Adrenal gland (tissue), 19 donors: ENCODE measurements at regions of chr3 and their contacts with region 1.

Region 1: DNA sequence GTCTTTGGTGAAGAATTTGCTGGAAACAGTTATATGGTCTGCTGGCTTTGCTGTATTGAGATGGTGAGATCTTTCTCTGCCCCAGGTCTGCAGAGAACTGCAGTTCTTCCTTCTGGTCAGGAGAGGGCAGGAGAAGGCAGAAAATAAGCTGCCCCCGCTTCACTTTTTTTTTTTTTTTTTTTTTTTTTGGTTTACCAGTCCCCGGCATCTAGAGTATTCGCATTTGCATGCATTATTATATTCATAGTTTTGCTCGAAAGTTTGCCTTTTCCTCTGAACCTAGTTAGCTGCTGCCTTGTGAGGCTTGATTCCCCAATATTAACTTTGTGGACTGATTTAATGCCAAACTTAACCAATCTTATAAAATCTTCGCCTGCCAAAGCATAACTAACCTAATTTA is 10.6 kb upstream of the PARL start:
- DNase-seq: peak in 5 of 7 donors; percentile 30 to 65 (median 43)
- H3K4me3 ChIP-seq: no peak overlapping the region
- H3K27ac ChIP-seq: no peak overlapping the region
- H3K4me1 ChIP-seq: no peaks in the 10 kb centered on the region
- H3K27me3 ChIP-seq: peaks cover 4% of the 10 kb centered on the region
- CTCF ChIP-seq: peak; percentile 66 to 91 (median 80)
- POLR2A ChIP-seq: no peak

Region 2: GRCh38 chr3:183966251-183966801 is 71.0 kb after region 1 on chr3:
- intact Hi-C with region 1: no loop called
- DNase-seq: no peak
- H3K4me3 ChIP-seq: no peak overlapping the region
- H3K27ac ChIP-seq: no peak overlapping the region
- H3K4me1 ChIP-seq: no peaks in the 10 kb centered on the region
- H3K27me3 ChIP-seq: no peaks in the 10 kb centered on the region
- CTCF ChIP-seq: no peak
- POLR2A ChIP-seq: no peak

Region 3: DNA sequence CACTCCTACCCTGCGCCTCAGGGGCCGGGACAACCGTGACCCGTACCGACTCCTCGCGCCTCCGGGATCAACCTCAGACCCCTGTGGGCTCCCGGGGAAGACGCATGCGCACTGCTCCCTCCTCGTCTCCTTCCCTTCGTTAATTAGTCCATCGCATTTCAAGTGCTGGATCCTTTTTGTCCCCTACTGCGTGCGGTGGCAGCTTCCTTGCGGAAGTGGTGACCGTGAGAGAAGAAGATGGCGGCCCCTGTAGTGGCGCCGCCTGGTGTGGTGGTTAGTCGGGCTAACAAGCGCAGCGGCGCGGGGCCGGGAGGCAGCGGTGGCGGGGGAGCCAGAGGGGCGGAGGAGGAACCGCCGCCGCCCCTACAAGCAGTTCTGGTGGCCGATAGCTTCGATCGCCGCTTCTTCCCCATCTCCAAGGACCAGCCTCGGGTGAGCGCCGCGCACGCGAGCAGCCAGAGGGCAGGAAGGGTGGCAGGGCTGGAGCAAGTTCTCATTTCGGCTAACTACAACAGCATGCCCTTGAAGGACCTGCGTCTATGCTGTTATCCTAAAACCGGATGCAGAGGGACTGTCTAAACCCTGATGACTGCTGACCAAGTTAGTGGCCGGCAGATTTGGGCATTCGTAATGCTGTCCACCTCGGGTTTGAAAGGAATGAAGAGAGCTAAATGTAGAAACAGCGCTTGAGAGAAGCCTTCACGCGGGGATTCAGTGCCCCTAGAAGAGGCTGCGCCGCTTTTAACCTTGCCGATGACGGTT is 240.0 kb after region 1 on chr3 and contains the start of gene EIF2B5:
- intact Hi-C with region 1: loop called in 1 of 2 experiments (anchors 10 kb)
- DNase-seq: peak; percentile 89 to 95 (median 91)
- H3K4me3 ChIP-seq: peak within 1 kb of the TSS; percentile 74 to 96 (median 84)
- H3K27ac ChIP-seq: peak within 1 kb of the TSS; percentile 48 to 91 (median 73)
- H3K4me1 ChIP-seq: peaks cover 7 to 16% of the 10 kb centered on the region in 2 donors
- H3K27me3 ChIP-seq: no peaks in the 10 kb centered on the region
- CTCF ChIP-seq: peak in 2 of 6 experiments; percentile 6 to 38
- POLR2A ChIP-seq: peak; percentile 33 to 74
- total RNA-seq, gene EIF2B5: 19.1 to 50.8 (median 40.2) TPM

Region 4: DNA sequence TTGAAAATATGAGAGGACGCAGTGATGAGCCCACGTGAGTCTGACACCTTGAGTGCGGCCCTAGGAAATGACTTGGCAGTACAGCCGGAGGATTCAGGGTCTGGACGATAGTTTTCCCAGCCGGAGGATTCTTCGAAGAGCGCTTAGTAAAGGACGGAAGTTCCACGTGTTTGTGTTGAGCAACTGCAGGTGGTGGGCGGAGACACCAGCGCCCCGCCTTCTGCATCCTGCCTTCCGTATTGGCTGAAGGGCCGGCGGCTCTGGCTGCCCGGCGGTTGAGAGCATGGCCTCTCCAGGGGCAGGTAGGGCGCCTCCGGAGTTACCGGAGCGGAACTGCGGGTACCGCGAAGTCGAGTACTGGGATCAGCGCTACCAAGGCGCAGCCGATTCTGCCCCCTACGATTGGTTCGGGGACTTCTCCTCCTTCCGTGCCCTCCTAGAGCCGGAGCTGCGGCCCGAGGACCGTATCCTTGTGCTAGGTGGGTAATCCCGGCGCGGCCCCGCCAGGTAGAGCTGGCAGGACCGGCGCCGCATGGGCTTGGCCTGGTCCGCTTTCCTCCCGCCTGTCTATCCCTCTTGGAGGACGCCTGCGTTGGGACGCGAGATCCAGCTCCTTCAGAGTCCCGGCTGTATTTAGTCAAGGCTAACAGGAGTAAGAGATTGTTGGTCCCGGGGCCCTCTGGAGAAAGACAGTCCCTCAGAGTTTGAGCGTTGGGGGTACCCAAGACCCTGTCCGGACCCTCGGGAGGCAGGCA is 354.3 kb after region 1 on chr3 and contains the start of gene EEF1AKMT4:
- intact Hi-C with region 1: loop called (anchors 10 kb)
- DNase-seq: peak; percentile 95 to 99 (median 98)
- H3K4me3 ChIP-seq: peak within 1 kb of the TSS; percentile 55 to 84 (median 79)
- H3K27ac ChIP-seq: peak within 1 kb of the TSS; percentile 61 to 86 (median 72)
- H3K4me1 ChIP-seq: peaks cover 4 to 15% of the 10 kb centered on the region in 2 donors
- H3K27me3 ChIP-seq: no peaks in the 10 kb centered on the region
- CTCF ChIP-seq: peak; percentile 41 to 70 (median 55)
- POLR2A ChIP-seq: peak in 1 of 2 donors; percentile 61
- total RNA-seq, gene EEF1AKMT4: 2.7 to 8.3 (median 4.3) TPM

Region 5: DNA sequence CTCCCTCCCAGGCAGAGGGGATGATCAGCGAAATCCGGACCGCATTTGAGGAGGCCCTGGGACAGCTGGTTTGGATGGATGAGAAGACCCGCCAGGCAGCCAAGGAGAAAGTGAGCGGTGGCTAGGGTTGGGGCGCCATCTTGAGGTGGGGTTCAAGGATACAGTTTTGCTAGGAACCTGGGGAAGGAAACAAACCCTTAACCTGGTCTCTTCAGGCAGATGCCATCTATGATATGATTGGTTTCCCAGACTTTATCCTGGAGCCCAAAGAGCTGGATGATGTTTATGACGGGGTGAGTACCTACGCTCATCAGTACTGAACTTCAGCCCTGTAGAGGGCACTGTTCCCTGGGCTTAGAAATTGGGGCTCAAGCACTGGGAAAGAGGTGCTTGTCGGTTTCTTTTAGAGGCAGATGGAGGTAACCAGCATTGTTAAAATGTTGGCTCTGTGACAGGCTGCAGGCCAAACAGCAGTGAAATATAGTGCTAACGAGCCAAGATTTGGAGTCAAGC is 394.2 kb after region 1 on chr3:
- intact Hi-C with region 1: loop called (anchors 5 to 10 kb)
- DNase-seq: peak in 5 of 7 donors; percentile 46 to 73 (median 59)
- H3K4me3 ChIP-seq: no peak overlapping the region
- H3K27ac ChIP-seq: no peak overlapping the region
- H3K4me1 ChIP-seq: no peaks in the 10 kb centered on the region
- H3K27me3 ChIP-seq: no peaks in the 10 kb centered on the region
- CTCF ChIP-seq: peak; percentile 42 to 62 (median 50)
- POLR2A ChIP-seq: no peak

Region 6: DNA sequence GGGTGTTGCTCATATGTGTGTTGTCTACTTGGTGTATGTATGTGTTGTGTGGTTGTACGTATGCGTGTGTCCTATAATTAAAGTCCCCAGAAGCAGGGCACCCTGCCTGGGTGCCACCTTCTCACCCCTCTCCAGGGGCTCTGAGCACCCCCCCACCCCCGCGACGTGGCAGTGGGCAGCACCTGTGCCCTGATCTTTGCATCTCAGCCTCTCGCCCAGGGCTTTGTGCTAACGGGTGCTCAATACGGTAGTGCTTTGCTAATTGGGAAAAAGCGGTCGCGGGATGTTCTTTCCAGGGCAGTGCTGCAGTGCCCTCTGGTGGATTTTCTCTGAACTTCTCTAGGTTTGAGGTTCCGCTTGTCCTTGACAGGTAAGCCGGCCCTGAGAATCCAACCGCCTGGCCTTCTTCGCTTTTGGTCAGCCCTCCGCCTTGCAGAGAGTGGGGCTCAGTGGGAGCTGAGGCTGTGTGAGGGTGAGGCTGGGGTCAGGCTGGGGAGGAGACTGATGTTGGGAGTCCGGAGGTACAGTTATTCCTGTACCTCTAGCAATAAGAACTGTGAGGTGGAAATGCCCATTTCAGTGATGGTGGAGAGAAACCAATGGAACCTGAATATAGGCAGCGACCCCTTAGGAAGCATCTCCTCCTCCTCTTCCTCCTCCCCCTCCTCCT is 648.7 kb after region 1 on chr3:
- intact Hi-C with region 1: loop called in 1 of 2 experiments (anchors 10 kb)
- DNase-seq: peak; percentile 75 to 90 (median 82)
- H3K4me3 ChIP-seq: no peak overlapping the region
- H3K27ac ChIP-seq: no peak overlapping the region
- H3K4me1 ChIP-seq: peaks cover 0 to 5% of the 10 kb centered on the region in 2 donors
- H3K27me3 ChIP-seq: peaks cover 5% of the 10 kb centered on the region
- CTCF ChIP-seq: peak; percentile 88 to 95 (median 91)
- POLR2A ChIP-seq: no peak